Heart left ventricle (tissue), 16 donors: ENCODE measurements at regions of chr7 and their contacts with region 1.

Region 1: GRCh38 chr7:15686295-15686956 is at the start of gene MEOX2:
- DNase-seq: peak; percentile 90 to 91 (median 90)
- ATAC-seq: peak; percentile 86 to 95 (median 92)
- H3K4me3 ChIP-seq: peak within 1 kb of the TSS; percentile 45 to 80 (median 72)
- H3K27ac ChIP-seq: peak within 1 kb of the TSS; percentile 85 to 95 (median 90)
- H3K4me1 ChIP-seq: peaks cover 0 to 15% (median 0%) of the 10 kb centered on the region in 12 donors
- H3K27me3 ChIP-seq: peaks cover 0 to 25% (median 0%) of the 10 kb centered on the region in 9 donors
- CTCF ChIP-seq: peak in 1 of 12 donors; percentile 5
- POLR2A ChIP-seq: peak in 1 of 2 donors; percentile 88
- total RNA-seq, gene MEOX2: 5.0 to 17.1 (median 11.0) TPM

Region 2: DNA sequence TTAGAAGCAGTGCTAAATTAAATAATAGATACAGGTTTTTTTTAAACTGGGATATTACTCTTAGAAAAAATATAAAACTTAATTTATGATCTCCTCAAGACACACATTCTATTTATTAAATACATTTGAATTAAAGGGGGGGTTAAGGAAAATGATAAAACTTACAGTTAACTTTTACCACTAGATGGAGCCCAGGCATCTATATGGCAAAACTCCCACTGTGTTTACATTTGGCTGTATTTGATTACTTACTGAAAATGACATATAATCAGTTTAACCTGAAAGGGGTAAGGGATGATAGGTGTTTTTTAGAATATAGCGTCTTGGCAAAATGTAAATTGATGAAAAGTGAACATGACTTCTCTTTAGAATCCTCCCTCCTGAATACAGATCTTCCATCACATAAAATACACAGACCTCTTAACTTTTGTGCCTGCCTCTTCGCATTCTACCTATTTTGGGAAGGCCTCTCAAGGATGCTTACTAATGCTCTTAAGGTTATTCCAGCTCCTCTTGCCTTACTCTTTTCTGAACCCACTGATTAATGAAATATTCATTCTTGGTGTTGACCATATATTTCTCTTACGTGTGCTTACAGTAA is 360.3 kb before region 1 on chr7:
- intact Hi-C with region 1: loop called in 2 of 10 experiments (anchors 10 kb)
- DNase-seq: no peak
- ATAC-seq: no peak
- H3K4me3 ChIP-seq: no peak overlapping the region
- H3K27ac ChIP-seq: no peak overlapping the region
- H3K4me1 ChIP-seq: peaks cover 0 to 4% (median 0%) of the 10 kb centered on the region in 12 donors
- H3K27me3 ChIP-seq: no peaks in the 10 kb centered on the region
- CTCF ChIP-seq: peak; percentile 35 to 76 (median 62)
- POLR2A ChIP-seq: no peak

Region 3: GRCh38 chr7:15555381-15555859 is 131.0 kb before region 1 on chr7:
- intact Hi-C with region 1: loop called in 8 of 10 experiments (anchors 2 to 10 kb)
- DNase-seq: no peak
- ATAC-seq: peak in 1 of 4 donors; percentile 30
- H3K4me3 ChIP-seq: peak overlapping the region in 1 of 12 donors; percentile 14
- H3K27ac ChIP-seq: no peak overlapping the region
- H3K4me1 ChIP-seq: peaks cover 0 to 32% (median 1%) of the 10 kb centered on the region in 12 donors
- H3K27me3 ChIP-seq: no peaks in the 10 kb centered on the region
- CTCF ChIP-seq: peak in 8 of 12 donors; percentile 27 to 57 (median 46)
- POLR2A ChIP-seq: no peak

Region 4: GRCh38 chr7:15764851-15765382 is 78.5 kb after region 1 on chr7:
- intact Hi-C with region 1: loop called in 2 of 10 experiments (anchors 5 to 10 kb)
- DNase-seq: peak in 3 of 5 donors; percentile 36 to 64 (median 60)
- ATAC-seq: peak; percentile 51 to 85 (median 67)
- H3K4me3 ChIP-seq: no peak overlapping the region
- H3K27ac ChIP-seq: peak overlapping the region in 11 of 12 donors; percentile 6 to 82 (median 55)
- H3K4me1 ChIP-seq: peaks cover 0 to 22% (median 4%) of the 10 kb centered on the region in 12 donors
- H3K27me3 ChIP-seq: no peaks in the 10 kb centered on the region
- CTCF ChIP-seq: no peak
- POLR2A ChIP-seq: no peak

Region 5: DNA sequence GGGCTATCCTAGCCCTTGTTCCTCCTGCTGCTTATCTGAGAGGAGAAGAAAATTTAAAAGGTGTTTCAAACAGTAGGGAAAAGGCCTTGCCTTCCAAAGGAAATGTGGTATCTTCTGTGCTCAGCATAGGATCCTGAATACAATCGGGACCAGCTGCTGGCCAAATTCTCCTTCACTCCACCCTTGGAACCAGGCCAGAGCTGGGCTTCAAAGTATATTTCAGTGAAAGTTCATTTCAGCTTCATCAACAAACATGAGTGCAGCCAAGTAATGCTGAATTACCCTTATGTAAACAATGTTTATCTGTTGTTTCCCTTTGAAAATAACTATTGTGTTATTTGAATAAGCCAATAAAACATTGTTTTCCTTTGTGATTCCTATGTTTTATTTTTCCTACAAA is 146.6 kb after region 1 on chr7:
- intact Hi-C with region 1: loop called in 5 of 10 experiments (anchors 2 to 10 kb)
- DNase-seq: peak; percentile 66 to 79 (median 72)
- ATAC-seq: peak; percentile 23 to 69 (median 44)
- H3K4me3 ChIP-seq: no peak overlapping the region
- H3K27ac ChIP-seq: peak overlapping the region in 9 of 12 donors; percentile 5 to 53 (median 26)
- H3K4me1 ChIP-seq: peaks cover 0 to 48% (median 22%) of the 10 kb centered on the region in 12 donors
- H3K27me3 ChIP-seq: no peaks in the 10 kb centered on the region
- CTCF ChIP-seq: no peak
- POLR2A ChIP-seq: no peak

Region 6: DNA sequence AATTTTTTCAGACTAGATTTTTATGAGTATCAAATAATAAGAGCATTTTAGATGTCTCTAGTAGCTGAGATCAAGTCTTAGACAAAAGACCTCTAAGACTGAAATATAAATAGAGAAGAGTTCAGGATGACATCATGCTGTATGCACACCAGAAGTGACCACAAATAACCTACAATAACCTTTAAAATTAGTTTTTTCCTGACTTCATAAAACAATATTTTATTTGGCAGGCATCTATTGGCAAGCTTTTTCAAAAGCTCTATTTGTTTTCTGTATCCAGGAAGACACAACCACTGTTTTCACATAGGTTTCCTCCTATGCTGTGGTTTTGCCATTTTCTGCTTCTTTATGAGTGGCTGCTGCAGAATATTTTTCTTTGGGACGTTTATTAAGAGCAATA is 375.8 kb after region 1 on chr7:
- intact Hi-C with region 1: loop called in 9 of 10 experiments (anchors 2 to 10 kb)
- DNase-seq: no peak
- ATAC-seq: peak; percentile 60 to 88 (median 71)
- H3K4me3 ChIP-seq: peak overlapping the region in 1 of 12 donors; percentile 14
- H3K27ac ChIP-seq: peak overlapping the region; percentile 53 to 93 (median 78)
- H3K4me1 ChIP-seq: peaks cover 3 to 67% (median 40%) of the 10 kb centered on the region in 12 donors
- H3K27me3 ChIP-seq: no peaks in the 10 kb centered on the region
- CTCF ChIP-seq: no peak
- POLR2A ChIP-seq: no peak